Heart left ventricle (tissue), 16 donors: ENCODE measurements at regions of chr19 and their contacts with region 1.

Region 1: DNA sequence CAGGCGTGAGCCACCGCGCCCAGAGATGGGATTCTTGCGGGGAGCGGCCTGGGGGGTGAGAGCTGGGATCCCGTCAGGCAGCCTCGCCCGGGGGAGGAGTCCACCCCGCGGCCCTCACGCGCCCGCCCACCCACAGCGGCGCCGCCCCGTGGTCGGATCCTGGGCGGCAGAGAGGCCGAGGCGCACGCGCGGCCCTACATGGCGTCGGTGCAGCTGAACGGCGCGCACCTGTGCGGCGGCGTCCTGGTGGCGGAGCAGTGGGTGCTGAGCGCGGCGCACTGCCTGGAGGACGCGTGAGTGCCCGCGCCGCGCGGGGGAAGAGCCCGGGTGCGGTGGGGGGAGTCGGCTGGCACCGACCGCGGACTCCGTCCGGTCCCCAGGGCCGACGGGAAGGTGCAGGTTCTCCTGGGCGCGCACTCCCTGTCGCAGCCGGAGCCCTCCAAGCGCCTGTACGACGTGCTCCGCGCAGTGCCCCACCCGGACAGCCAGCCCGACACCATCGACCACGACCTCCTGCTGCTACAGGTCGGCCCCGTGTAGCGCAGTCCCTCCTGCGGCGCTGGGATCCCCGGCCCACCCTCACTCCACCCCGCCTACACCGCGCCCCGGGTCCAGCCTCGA is 1.1 kb downstream of the CFD start:
- DNase-seq: peak in 4 of 5 donors; percentile 77 to 82 (median 79)
- ATAC-seq: peak in 3 of 4 donors; percentile 52 to 67 (median 65)
- H3K4me3 ChIP-seq: peak overlapping the region; percentile 13 to 59 (median 44)
- H3K27ac ChIP-seq: peak overlapping the region in 7 of 12 donors; percentile 31 to 80 (median 75)
- H3K4me1 ChIP-seq: peaks cover 0 to 42% (median 4%) of the 10 kb centered on the region in 12 donors
- H3K27me3 ChIP-seq: peaks cover 0 to 48% (median 17%) of the 10 kb centered on the region in 9 donors
- CTCF ChIP-seq: peak in 6 of 12 donors; percentile 13 to 39 (median 22)
- POLR2A ChIP-seq: no peak

Region 2: DNA sequence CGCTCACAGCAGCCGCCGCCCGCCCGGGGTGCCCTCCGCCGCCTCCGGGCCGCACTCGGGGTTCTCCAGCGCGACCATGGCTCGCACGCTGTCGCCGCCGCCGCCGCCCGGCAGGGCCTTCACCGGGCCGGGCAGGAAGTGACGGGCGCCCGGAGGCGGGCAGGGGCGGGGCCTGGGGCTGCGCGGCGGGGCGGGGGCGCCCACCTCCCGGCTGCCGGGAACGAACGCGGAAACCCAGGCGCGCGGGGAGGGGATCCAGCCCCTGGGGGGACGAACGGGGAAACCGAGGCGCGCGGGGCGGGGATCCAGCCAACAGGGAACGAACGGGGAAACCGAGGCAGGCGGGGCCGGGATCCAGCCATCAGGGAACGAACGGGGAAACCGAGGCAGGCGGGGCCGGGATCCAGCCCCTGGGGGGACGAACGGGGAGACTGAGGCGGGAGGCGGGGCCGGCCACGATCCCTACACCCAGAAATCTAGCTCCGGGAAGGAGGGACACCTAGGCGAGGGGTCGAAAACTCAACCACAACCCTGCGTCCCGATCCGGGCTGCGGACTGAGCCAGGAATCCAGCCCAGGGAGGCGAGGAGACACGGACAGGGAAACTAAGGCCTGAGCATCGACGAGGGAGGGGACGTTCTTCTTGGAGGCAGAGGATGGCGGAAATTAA is 52.6 kb after region 1 on chr19 and contains the start of gene R3HDM4:
- intact Hi-C with region 1: loop called in 6 of 10 experiments (anchors 5 kb)
- DNase-seq: peak; percentile 84 to 93 (median 87)
- ATAC-seq: peak; percentile 79 to 95 (median 90)
- H3K4me3 ChIP-seq: peak within 1 kb of the TSS; percentile 72 to 99 (median 88)
- H3K27ac ChIP-seq: peak within 1 kb of the TSS in 11 of 12 donors; percentile 80 to 97 (median 92)
- H3K4me1 ChIP-seq: peaks cover 7 to 56% (median 19%) of the 10 kb centered on the region in 12 donors
- H3K27me3 ChIP-seq: peaks cover 13 to 23% (median 18%) of the 10 kb centered on the region in 9 donors
- CTCF ChIP-seq: no peak
- POLR2A ChIP-seq: peak in 1 of 2 donors; percentile 51
- total RNA-seq, gene R3HDM4: 17.1 to 35.5 (median 23.8) TPM

Region 3: GRCh38 chr19:920051-920864 is 59.7 kb after region 1 on chr19:
- intact Hi-C with region 1: loop called in 8 of 10 experiments (anchors 2 to 5 kb)
- DNase-seq: no peak
- ATAC-seq: no peak
- H3K4me3 ChIP-seq: peak overlapping the region in 8 of 12 donors; percentile 5 to 51 (median 20)
- H3K27ac ChIP-seq: peak overlapping the region in 1 of 12 donors; percentile 37
- H3K4me1 ChIP-seq: peaks cover 7 to 61% (median 34%) of the 10 kb centered on the region in 12 donors
- H3K27me3 ChIP-seq: peaks cover 38 to 54% (median 48%) of the 10 kb centered on the region in 9 donors
- CTCF ChIP-seq: no peak
- POLR2A ChIP-seq: no peak

Region 4: GRCh38 chr19:984165-984967 is 123.8 kb after region 1 on chr19 and contains the start of gene WDR18:
- intact Hi-C with region 1: loop called in 4 of 10 experiments (anchors 5 to 10 kb)
- DNase-seq: peak; percentile 94 to 97 (median 94)
- ATAC-seq: peak; percentile 87 to 97 (median 96)
- H3K4me3 ChIP-seq: peak within 1 kb of the TSS; percentile 80 to 100 (median 91)
- H3K27ac ChIP-seq: peak within 1 kb of the TSS; percentile 67 to 92 (median 86)
- H3K4me1 ChIP-seq: peaks cover 3 to 38% (median 19%) of the 10 kb centered on the region in 12 donors
- H3K27me3 ChIP-seq: no peaks in the 10 kb centered on the region
- CTCF ChIP-seq: peak in 8 of 12 donors; percentile 11 to 50 (median 34)
- POLR2A ChIP-seq: peak in 1 of 2 donors; percentile 57
- total RNA-seq, gene WDR18: 15.6 to 36.3 (median 19.2) TPM